ENCODE measurements at regions of chr10 and their contacts with region 1.

Region 1: DNA sequence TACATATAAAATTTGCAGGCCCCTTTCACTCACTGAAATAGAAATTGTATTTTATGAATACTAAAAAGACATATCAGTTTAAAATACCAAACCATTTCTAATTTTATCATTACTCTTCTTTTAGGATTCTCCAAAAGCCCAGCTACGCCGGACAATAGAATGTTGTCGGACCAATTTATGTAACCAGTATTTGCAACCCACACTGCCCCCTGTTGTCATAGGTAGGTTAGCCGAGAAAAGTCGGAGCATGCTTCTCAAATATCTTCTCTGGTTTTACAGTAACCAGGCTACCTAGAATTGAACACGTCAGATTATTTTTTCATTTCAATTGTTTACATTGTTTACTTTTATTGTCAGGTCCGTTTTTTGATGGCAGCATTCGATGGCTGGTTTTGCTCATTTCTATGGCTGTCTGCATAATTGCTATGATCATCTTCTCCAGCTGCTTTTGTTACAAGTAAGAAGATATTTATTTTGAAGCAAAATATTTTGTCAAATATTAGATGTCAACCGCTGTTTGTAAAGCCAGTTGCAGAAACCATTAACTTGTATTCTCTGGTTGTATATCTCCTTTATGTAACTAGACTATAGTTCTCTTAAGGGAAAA is 57.6 kb downstream of the MMRN2 start:
- DNase-seq: peak; percentile 59
- ATAC-seq: no peak
- H3K4me3 ChIP-seq: no peak overlapping the region
- H3K4me3 Mint-ChIP-seq: no peak overlapping the region
- H3K27ac ChIP-seq: no peak overlapping the region
- H3K27ac Mint-ChIP-seq: no peak overlapping the region
- H3K4me1 ChIP-seq: no peaks in the 10 kb centered on the region
- H3K4me1 Mint-ChIP-seq: no peaks in the 10 kb centered on the region
- H3K27me3 ChIP-seq: no peaks in the 10 kb centered on the region
- H3K27me3 Mint-ChIP-seq: no peaks in the 10 kb centered on the region
- CTCF ChIP-seq: peak; percentile 74

Region 2: DNA sequence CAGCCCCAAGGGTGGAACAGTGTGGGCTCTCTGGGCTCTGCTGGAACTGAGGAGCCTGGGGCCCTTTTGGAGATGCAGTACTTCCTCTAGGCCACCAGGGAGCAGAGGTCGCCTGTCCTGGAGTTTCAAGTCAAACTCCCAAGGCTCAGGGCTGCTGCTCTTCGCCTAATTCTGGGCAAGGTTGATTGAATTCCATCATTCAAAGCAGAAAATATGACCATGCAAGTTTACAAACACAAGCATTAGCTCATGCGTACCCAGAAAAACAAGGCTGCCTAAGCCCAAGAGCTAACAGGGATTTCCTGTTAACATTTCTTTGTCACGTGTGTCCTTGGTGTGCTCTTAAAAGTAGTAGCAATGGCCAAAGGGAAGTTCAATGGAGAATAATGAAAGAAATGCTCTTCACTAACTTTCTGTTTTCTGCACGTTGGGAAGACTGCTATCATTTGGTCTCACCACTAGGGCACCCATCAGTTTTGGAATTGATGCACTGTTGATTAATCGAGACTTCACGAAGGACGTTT is 211.3 kb before region 1 on chr10:
- CTCF ChIA-PET with region 1: interaction called, 68 read pairs
- POLR2A ChIA-PET with region 1: no interaction called
- intact Hi-C with region 1: loop called (anchors 1 kb)
- DNase-seq: peak; percentile 68
- ATAC-seq: peak; percentile 87
- H3K4me3 ChIP-seq: no peak overlapping the region
- H3K4me3 Mint-ChIP-seq: peak overlapping the region; percentile 39
- H3K27ac ChIP-seq: no peak overlapping the region
- H3K27ac Mint-ChIP-seq: no peak overlapping the region
- H3K4me1 ChIP-seq: peaks cover 5 to 6% of the 10 kb centered on the region in 2 donors
- H3K4me1 Mint-ChIP-seq: peaks cover 5% of the 10 kb centered on the region
- H3K27me3 ChIP-seq: peaks cover 0 to 6% (median 0%) of the 10 kb centered on the region in 4 experiments
- H3K27me3 Mint-ChIP-seq: peaks cover 5% of the 10 kb centered on the region
- CTCF ChIP-seq: peak; percentile 78

Region 3: DNA sequence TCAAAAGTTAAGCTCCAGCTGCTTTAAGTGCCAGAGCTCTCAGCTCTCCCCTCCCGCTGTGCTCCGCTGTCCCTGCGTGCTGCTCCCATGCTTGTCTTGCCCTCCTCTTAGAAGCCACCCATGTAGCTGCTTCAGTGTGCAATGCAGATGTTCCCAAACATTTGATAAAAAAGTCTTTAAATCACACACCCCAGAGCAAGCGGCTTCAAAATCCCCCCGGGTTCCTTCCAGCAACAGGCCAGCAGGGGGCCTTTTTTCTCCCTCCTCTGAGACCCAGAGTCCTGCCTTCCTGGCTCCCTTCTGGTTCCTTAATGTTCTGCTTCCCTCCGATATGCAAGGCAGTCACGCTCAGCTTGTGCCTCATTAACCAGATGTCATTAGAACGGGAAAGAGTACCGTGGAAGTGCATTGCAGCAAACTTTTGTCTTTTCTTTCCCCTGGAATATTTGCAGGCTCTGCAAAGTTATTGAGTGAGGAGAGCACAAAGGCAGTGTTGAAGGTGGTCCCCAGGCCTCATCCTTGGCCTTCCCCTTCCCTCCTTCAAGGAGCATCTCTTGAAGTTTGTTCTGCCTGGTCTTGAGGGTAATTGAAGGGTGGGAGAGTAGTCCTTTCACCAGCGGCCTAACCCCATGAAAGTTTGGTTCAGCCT is 205.9 kb before region 1 on chr10:
- CTCF ChIA-PET with region 1: interaction called, 68 read pairs
- POLR2A ChIA-PET with region 1: no interaction called
- intact Hi-C with region 1: loop called (anchors 1 kb)
- DNase-seq: peak; percentile 49
- ATAC-seq: no peak
- H3K4me3 ChIP-seq: no peak overlapping the region
- H3K4me3 Mint-ChIP-seq: no peak overlapping the region
- H3K27ac ChIP-seq: no peak overlapping the region
- H3K27ac Mint-ChIP-seq: no peak overlapping the region
- H3K4me1 ChIP-seq: no peaks in the 10 kb centered on the region
- H3K4me1 Mint-ChIP-seq: no peaks in the 10 kb centered on the region
- H3K27me3 ChIP-seq: no peaks in the 10 kb centered on the region
- H3K27me3 Mint-ChIP-seq: peaks cover 5% of the 10 kb centered on the region
- CTCF ChIP-seq: peak; percentile 72

Region 4: GRCh38 chr10:86888585-86889381 is 11.0 kb before region 1 on chr10:
- CTCF ChIA-PET with region 1: interaction called, 21 read pairs
- POLR2A ChIA-PET with region 1: no interaction called
- intact Hi-C with region 1: loop called (anchors 1 kb)
- DNase-seq: peak; percentile 59
- ATAC-seq: peak; percentile 94
- H3K4me3 ChIP-seq: no peak overlapping the region
- H3K4me3 Mint-ChIP-seq: peak overlapping the region; percentile 18
- H3K27ac ChIP-seq: peak overlapping the region in 1 of 2 donors; percentile 35
- H3K27ac Mint-ChIP-seq: peak overlapping the region; percentile 59
- H3K4me1 ChIP-seq: peaks cover 9 to 13% of the 10 kb centered on the region in 2 donors
- H3K4me1 Mint-ChIP-seq: peaks cover 11% of the 10 kb centered on the region
- H3K27me3 ChIP-seq: no peaks in the 10 kb centered on the region
- H3K27me3 Mint-ChIP-seq: no peaks in the 10 kb centered on the region
- CTCF ChIP-seq: no peak

Region 5: DNA sequence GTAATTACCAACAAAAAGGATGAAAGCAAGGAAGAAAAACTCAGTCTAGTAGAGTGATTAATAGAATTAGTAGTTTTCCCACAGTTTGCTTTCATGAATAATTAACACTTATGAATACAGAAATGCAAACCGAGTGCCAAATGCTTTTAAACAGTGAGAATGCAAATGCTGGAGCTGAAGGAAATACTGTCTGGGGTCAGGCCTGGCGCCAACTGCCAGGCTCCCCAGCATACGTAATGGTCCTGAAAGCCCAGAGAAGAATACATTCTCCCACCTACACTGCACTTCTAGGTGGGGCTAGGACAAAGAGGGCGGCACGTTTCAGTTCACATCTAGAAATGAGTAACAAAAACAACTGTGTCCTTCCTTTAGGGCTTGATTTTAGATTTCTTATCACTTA is 164.9 kb after region 1 on chr10:
- CTCF ChIA-PET with region 1: no interaction called
- POLR2A ChIA-PET with region 1: no interaction called
- intact Hi-C with region 1: no loop called
- DNase-seq: no peak
- ATAC-seq: no peak
- H3K4me3 ChIP-seq: no peak overlapping the region
- H3K4me3 Mint-ChIP-seq: no peak overlapping the region
- H3K27ac ChIP-seq: no peak overlapping the region
- H3K27ac Mint-ChIP-seq: no peak overlapping the region
- H3K4me1 ChIP-seq: no peaks in the 10 kb centered on the region
- H3K4me1 Mint-ChIP-seq: no peaks in the 10 kb centered on the region
- H3K27me3 ChIP-seq: no peaks in the 10 kb centered on the region
- H3K27me3 Mint-ChIP-seq: no peaks in the 10 kb centered on the region
- CTCF ChIP-seq: no peak

Measured in B cell (primary cell).